Natural killer cell (primary cell): ENCODE measurements at regions of chr19 and their contacts with region 1.

Region 1: DNA sequence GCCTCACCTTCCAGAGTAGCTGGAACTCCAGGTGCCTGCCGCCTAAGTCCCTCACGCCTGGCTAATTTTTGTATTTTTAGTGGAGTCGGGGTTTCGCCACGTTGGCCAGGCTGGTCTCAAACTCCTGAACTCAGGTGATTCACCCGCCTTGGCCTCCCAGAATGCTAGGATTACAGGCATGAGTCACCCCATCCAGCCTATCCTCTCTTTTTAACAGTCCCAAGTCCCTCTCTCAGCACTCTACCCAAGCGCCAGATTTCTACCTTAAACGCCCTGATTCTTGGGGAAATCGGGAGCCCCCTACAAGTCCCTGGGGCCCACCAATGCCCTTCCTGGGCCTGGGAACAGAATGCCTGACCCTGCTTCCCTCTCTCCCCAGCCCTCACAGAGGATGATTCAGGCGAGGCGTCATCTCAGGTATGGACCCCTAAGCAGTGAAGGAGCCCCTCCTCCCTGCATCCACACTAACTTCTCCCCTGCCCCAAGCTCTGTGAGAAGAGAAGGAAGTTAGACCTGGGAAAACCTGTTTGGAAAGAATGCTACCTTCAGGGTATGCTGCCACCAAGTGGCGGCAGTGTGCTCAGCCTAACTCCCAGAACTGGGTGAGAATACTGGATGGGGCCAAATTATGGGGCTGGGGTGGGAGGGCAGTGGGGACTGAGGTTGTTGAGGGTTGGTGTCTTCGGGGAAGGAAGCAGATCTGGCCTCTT is 20.8 kb upstream of the EBI3 start:
- DNase-seq: no peak
- ATAC-seq: peak in 1 of 3 donors; percentile 40
- H3K4me3 ChIP-seq: no peak overlapping the region
- H3K4me3 Mint-ChIP-seq: no peak overlapping the region
- H3K27ac ChIP-seq: no peak overlapping the region
- H3K27ac Mint-ChIP-seq: no peak overlapping the region
- H3K4me1 ChIP-seq: peaks cover 4% of the 10 kb centered on the region
- H3K4me1 Mint-ChIP-seq: peaks cover 0 to 13% of the 10 kb centered on the region in 2 donors
- H3K27me3 ChIP-seq: no peaks in the 10 kb centered on the region
- H3K27me3 Mint-ChIP-seq: peaks cover 0 to 4% of the 10 kb centered on the region in 2 donors
- CTCF ChIP-seq: peak; percentile 2

Region 2: DNA sequence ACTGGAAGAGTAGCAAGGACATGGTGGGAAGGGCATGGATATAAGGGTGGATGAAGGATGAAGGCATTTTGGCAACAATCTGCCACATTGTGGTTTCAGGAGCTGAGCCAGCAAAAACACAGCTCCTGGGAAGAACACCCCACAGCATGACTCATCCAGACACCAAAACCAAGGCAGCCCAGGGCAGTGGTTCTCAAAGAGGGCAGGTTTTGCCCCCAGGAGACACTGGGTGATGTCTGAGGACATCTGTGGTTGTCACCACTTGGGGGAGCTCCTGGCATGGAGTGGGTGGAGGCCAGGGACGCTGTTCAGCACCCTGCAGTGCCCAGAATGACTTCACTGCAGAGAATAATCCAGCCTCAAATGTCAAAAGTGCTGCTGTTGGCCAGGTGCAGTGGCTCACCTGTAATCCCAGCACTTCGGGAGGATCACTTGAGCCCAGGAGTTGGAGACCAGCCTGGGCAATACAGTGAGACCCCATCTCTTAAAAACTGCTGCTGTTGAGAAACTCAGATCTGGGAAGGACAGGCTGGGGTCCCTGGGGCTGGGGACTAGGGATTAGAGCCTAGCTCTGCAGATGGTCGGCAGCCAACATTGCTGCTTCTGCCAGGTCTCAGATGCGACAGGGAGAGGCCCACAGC is 355.8 kb before region 1 on chr19:
- intact Hi-C with region 1: loop called (anchors 1 kb)
- DNase-seq: peak; percentile 52 to 63
- ATAC-seq: peak; percentile 69 to 86 (median 85)
- H3K4me3 ChIP-seq: no peak overlapping the region
- H3K4me3 Mint-ChIP-seq: no peak overlapping the region
- H3K27ac ChIP-seq: no peak overlapping the region
- H3K27ac Mint-ChIP-seq: no peak overlapping the region
- H3K4me1 ChIP-seq: peaks cover 3% of the 10 kb centered on the region
- H3K4me1 Mint-ChIP-seq: no peaks in the 10 kb centered on the region
- H3K27me3 ChIP-seq: no peaks in the 10 kb centered on the region
- H3K27me3 Mint-ChIP-seq: peaks cover 0 to 2% of the 10 kb centered on the region in 2 donors
- CTCF ChIP-seq: peak; percentile 48

Region 3: GRCh38 chr19:4103073-4103418 is 105.5 kb before region 1 on chr19:
- intact Hi-C with region 1: no loop called
- DNase-seq: no peak
- ATAC-seq: no peak
- H3K4me3 ChIP-seq: no peak overlapping the region
- H3K4me3 Mint-ChIP-seq: no peak overlapping the region
- H3K27ac ChIP-seq: peak overlapping the region; percentile 94
- H3K27ac Mint-ChIP-seq: peak overlapping the region; percentile 96 to 97
- H3K4me1 ChIP-seq: peaks cover 57% of the 10 kb centered on the region
- H3K4me1 Mint-ChIP-seq: peaks cover 29 to 41% of the 10 kb centered on the region in 2 donors
- H3K27me3 ChIP-seq: no peaks in the 10 kb centered on the region
- H3K27me3 Mint-ChIP-seq: no peaks in the 10 kb centered on the region
- CTCF ChIP-seq: no peak

Region 4: DNA sequence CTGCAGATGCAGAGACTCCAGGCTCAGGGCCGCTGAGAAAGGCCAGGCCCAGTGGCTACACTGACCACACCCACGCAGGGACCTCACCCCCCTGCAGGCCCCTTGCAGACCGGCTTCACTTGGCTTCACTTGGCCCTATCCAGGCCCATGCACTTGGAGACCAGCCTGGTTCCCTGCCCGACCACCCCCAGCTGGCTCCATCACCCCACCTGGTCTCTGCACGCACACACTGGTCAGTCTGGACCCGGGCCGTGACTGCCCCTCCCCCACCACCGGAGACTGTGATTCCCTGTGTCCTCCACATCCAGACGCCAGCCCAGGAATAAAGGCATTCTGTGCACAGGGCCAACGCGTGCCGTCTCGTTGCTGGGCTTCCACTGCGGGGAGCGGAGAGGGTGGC is 15.9 kb after region 1 on chr19:
- intact Hi-C with region 1: no loop called
- DNase-seq: no peak
- ATAC-seq: no peak
- H3K4me3 ChIP-seq: no peak overlapping the region
- H3K4me3 Mint-ChIP-seq: no peak overlapping the region
- H3K27ac ChIP-seq: no peak overlapping the region
- H3K27ac Mint-ChIP-seq: no peak overlapping the region
- H3K4me1 ChIP-seq: peaks cover 7% of the 10 kb centered on the region
- H3K4me1 Mint-ChIP-seq: no peaks in the 10 kb centered on the region
- H3K27me3 ChIP-seq: peaks cover 6% of the 10 kb centered on the region
- H3K27me3 Mint-ChIP-seq: peaks cover 0 to 4% of the 10 kb centered on the region in 2 donors
- CTCF ChIP-seq: no peak